ENCODE measurements at regions of chr3 and their contacts with region 1.

Region 1: GRCh38 chr3:107522510-107523288 is at the start of gene BBX:
- H3K4me3 Mint-ChIP-seq: peak within 1 kb of the TSS; percentile 88
- H3K27ac Mint-ChIP-seq: peak within 1 kb of the TSS; percentile 91
- H3K4me1 Mint-ChIP-seq: peaks cover 21% of the 10 kb centered on the region
- H3K27me3 Mint-ChIP-seq: peaks cover 9% of the 10 kb centered on the region

Region 2: GRCh38 chr3:107429320-107430181 is 93.1 kb before region 1 on chr3:
- intact Hi-C with region 1: loop called (anchors 2 kb)
- H3K4me3 Mint-ChIP-seq: peak overlapping the region; percentile 13
- H3K27ac Mint-ChIP-seq: no peak overlapping the region
- H3K4me1 Mint-ChIP-seq: peaks cover 17% of the 10 kb centered on the region
- H3K27me3 Mint-ChIP-seq: peaks cover 24% of the 10 kb centered on the region

Region 3: GRCh38 chr3:107543666-107544065 is 21.0 kb after region 1 on chr3:
- intact Hi-C with region 1: no loop called
- H3K4me3 Mint-ChIP-seq: no peak overlapping the region
- H3K27ac Mint-ChIP-seq: no peak overlapping the region
- H3K4me1 Mint-ChIP-seq: no peaks in the 10 kb centered on the region
- H3K27me3 Mint-ChIP-seq: no peaks in the 10 kb centered on the region

Region 4: GRCh38 chr3:107740992-107741896 is 218.5 kb after region 1 on chr3:
- intact Hi-C with region 1: no loop called
- H3K4me3 Mint-ChIP-seq: no peak overlapping the region
- H3K27ac Mint-ChIP-seq: no peak overlapping the region
- H3K4me1 Mint-ChIP-seq: peaks cover 11% of the 10 kb centered on the region
- H3K27me3 Mint-ChIP-seq: no peaks in the 10 kb centered on the region

Measured in dendritic cell treated with granulocyte-macrophage colony-stimulating factor and Interleukin-4, amounts not matched to agents 40 ng/mL and 50 ng/mL, for 4 days (primary cell).